Activated T-helper 1 cell treated with anti-CD3 and anti-CD28 coated beads, Interleukin-12 subunit alpha, Interleukin-12 subunit beta, Interleukin-2, Interleukin-4 antibody, amounts not matched to agents 30 ng/mL and 10 ng/mL and 1 ng/mL, durations not matched to agents 14 hours and 24 hours and 36 hours (primary cell): ENCODE measurements at regions of chrX and their contacts with region 1.

Region 1: DNA sequence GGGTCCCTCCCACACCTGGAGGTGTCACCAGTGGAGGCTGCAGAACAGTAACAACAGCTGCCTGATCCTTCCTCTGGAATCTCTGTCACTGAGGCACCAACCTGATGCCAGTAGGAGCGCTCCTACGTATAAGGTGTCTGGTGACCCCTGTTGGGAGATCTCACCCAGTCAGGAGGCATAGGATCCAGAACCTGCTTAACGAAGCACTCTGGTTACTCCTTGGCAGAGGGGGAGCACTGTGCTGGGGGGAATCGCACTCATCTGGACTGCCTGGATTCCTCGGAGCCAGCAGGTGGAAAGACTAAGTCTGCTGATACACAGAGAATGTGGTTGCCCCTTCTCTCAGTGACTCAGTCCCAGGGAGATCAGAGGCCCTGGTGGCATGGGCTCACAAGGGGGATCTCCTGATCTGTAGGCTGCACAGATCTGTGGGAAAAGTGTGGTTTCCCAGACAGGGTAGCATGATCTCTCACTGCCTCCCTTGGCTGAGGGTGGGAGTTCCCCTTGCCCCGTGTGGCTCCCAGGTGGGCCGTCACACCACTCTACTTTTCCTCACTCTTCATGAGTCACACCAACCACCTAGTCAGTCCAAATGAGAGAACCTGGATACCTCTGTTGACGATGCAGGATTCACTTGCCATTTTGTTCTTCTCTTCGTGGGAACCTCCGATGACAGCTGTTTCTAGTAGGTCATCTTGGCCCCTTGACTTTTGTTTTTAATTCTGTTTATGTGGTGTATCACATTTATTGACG is 305.9 kb downstream of the IDS start:
- DNase-seq: no peak
- H3K4me3 Mint-ChIP-seq: no peak overlapping the region
- H3K27ac Mint-ChIP-seq: peak overlapping the region; percentile 16
- H3K4me1 Mint-ChIP-seq: peaks cover 4% of the 10 kb centered on the region
- H3K27me3 Mint-ChIP-seq: peaks cover 1% of the 10 kb centered on the region

Region 2: DNA sequence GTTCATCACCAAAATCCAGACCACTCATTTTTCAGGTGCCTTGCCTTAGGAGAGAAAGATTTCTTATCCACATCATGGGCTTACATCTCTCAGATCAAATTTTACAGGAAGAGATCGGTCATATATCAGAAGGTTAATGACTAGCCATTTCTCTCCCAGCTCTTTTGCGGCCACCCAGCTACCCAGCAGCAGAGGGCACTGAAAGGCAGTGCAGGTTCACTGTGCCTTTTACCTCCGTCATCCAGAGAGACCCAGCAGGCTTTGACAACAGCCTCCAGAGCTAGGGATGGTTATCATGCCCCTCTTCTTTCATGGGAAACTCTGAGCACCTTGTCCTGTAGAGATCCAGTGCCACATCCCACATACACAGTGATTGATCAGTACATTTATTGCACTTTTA is 313.9 kb before region 1 on chrX:
- intact Hi-C with region 1: no loop called
- DNase-seq: no peak
- H3K4me3 Mint-ChIP-seq: no peak overlapping the region
- H3K27ac Mint-ChIP-seq: no peak overlapping the region
- H3K4me1 Mint-ChIP-seq: no peaks in the 10 kb centered on the region
- H3K27me3 Mint-ChIP-seq: no peaks in the 10 kb centered on the region

Region 3: DNA sequence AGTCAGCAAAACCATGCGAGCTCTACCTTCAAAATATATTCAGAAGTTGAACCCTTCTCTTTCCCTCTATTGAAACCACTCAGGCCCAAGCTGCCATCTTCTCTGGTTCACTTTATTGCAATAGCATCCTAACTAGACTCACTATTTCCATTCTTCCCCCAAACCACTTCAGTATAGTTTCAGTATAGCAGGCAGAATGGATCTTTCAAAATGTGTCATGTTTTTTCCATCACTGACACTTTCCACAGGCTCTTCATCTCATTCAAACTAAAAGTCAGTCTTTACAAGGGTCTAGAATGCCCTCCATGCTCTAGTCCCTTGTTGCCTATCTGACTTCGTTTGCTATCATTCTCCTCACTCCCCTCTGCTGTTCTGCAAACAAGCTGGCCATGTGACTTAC is 31.5 kb after region 1 on chrX:
- intact Hi-C with region 1: loop called (anchors 1 kb)
- DNase-seq: no peak
- H3K4me3 Mint-ChIP-seq: no peak overlapping the region
- H3K27ac Mint-ChIP-seq: peak overlapping the region; percentile 87
- H3K4me1 Mint-ChIP-seq: peaks cover 9% of the 10 kb centered on the region
- H3K27me3 Mint-ChIP-seq: peaks cover 1% of the 10 kb centered on the region

Region 4: GRCh38 chrX:149306445-149306844 is 107.3 kb after region 1 on chrX:
- intact Hi-C with region 1: no loop called
- DNase-seq: no peak
- H3K4me3 Mint-ChIP-seq: no peak overlapping the region
- H3K27ac Mint-ChIP-seq: no peak overlapping the region
- H3K4me1 Mint-ChIP-seq: no peaks in the 10 kb centered on the region
- H3K27me3 Mint-ChIP-seq: peaks cover 2% of the 10 kb centered on the region